PC-3 (cell line): ENCODE measurements at regions of chr1 and their contacts with region 1.

Region 1: DNA sequence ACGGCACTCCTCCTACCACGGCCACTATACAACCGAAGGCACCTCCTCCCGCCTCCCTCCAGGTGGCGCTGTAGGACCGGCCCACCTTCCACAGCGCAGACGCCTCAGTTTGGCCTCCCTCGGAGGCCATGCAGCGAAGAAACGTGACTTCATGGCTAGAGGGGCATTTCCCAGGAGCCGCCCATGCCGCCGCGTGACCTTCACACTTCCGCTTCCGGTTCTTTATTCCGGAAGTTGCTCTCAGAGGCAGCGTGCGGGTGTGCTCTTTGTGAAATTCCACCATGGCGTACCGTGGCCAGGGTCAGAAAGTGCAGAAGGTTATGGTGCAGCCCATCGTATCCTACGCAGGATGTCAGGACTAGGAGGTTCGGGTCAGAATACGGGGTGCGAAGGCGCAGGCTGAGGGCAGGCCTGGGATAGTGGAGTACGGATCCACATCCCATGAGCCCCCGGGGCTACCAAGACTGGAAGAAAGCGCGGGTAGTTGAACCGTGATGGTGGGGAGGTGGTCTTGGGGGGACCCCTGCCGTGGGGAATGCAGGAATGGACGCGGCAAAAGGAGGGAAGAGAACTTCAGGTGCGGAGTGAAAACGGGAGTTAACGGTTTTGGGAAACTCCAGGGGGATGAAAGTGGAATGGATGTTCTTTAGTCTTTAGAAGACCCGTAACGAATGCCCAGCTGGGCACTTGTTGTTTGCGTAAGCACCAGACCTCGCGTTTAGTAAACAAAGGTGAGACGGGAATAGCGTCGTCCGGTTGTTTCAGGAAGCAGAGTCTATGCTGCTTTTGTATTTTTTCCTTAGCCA is at the start of gene SNRPE:
- DNase-seq: peak; percentile 99
- ATAC-seq: peak; percentile 86
- H3K4me3 ChIP-seq: peak within 1 kb of the TSS; percentile 91
- H3K27ac ChIP-seq: peak within 1 kb of the TSS; percentile 82
- H3K4me1 ChIP-seq: peaks cover 36% of the 10 kb centered on the region
- H3K27me3 ChIP-seq: no peaks in the 10 kb centered on the region
- CTCF ChIP-seq: peak; percentile 88
- total RNA-seq, gene SNRPE: 167 and 187 TPM in 2 replicates

Region 2: DNA sequence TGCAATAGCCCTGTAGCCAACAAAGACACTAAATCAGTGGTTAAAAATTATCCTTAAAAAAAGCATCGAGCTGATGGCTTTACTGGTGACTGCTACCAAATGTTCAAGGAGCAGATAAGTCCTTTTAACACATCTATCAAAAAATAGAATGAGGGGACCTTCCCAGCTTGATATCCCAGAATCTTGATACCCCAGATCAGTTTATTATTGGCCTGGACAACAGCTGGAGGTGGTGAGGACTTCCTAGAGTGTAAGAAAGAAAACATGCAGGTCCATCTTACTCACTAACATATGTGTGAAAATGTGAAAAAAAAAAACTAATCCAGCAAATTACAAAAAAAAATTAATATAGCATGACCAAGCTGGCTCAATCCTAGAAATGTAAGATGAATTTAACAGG is 653.4 kb before region 1 on chr1:
- CTCF ChIA-PET with region 1: interaction called, 12 read pairs
- POLR2A ChIA-PET with region 1: no interaction called
- intact Hi-C with region 1: no loop called
- DNase-seq: no peak
- ATAC-seq: no peak
- H3K4me3 ChIP-seq: no peak overlapping the region
- H3K27ac ChIP-seq: no peak overlapping the region
- H3K4me1 ChIP-seq: no peaks in the 10 kb centered on the region
- H3K27me3 ChIP-seq: peaks cover 34% of the 10 kb centered on the region
- CTCF ChIP-seq: no peak

Region 3: GRCh38 chr1:204072931-204073836 is 211.6 kb after region 1 on chr1 and contains the start of gene SOX13:
- CTCF ChIA-PET with region 1: interaction called, 4 read pairs
- POLR2A ChIA-PET with region 1: no interaction called
- intact Hi-C with region 1: loop called (anchors 1 kb)
- DNase-seq: peak; percentile 89
- ATAC-seq: peak; percentile 78
- H3K4me3 ChIP-seq: peak within 1 kb of the TSS; percentile 88
- H3K27ac ChIP-seq: peak within 1 kb of the TSS; percentile 57
- H3K4me1 ChIP-seq: peaks cover 27% of the 10 kb centered on the region
- H3K27me3 ChIP-seq: no peaks in the 10 kb centered on the region
- CTCF ChIP-seq: peak; percentile 32
- total RNA-seq, gene SOX13: 81.9 and 93.1 TPM in 2 replicates

Region 4: GRCh38 chr1:204162231-204163074 is 300.9 kb after region 1 on chr1:
- CTCF ChIA-PET with region 1: interaction called, 12 read pairs
- POLR2A ChIA-PET with region 1: no interaction called
- intact Hi-C with region 1: loop called (anchors 1 kb)
- DNase-seq: peak; percentile 98
- ATAC-seq: peak; percentile 92
- H3K4me3 ChIP-seq: no peak overlapping the region
- H3K27ac ChIP-seq: no peak overlapping the region
- H3K4me1 ChIP-seq: peaks cover 16% of the 10 kb centered on the region
- H3K27me3 ChIP-seq: no peaks in the 10 kb centered on the region
- CTCF ChIP-seq: peak; percentile 100

Region 5: DNA sequence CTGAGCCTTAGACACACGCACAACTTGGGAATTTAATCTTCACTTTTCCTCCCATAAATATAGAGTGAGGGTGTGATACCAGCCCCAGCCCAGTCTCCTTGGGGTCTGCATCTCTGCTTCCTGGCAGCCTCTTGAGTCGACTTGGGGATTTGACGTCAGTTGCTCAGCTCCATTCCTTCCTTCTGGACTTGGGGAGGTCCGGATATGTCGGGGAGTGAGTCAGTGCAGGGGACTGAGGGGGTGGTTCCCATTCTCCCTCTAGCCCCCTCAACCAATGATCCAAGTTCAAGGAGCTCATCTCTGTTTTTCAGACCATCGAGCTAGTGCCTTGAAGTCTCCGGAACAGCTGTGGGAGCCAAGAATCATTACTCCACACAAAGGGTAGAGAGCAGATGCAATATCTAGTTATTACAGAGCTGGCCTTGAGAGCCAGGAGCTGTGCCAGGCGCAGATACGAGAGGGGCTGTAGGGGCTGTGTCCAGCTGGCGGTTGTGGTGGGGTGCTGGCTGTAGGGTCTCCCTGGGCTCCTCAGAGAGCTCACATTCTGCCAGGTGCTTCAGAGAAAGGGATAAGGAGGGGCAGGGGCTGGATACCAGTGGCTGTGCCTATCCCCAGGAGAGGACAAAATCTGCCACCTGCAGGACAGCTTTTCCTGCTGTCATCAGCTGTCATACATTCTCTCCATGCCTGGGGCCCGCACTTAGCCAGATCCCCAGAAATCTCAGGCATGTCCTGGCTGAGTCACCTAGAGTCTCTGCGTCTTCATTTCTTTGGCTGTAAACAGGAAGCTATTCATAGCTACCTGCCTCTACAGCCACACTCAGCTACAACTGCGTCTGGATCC is 336.8 kb after region 1 on chr1:
- CTCF ChIA-PET with region 1: interaction called, 6 read pairs
- POLR2A ChIA-PET with region 1: no interaction called
- intact Hi-C with region 1: loop called (anchors 2 kb)
- DNase-seq: peak; percentile 98
- ATAC-seq: peak; percentile 95
- H3K4me3 ChIP-seq: no peak overlapping the region
- H3K27ac ChIP-seq: peak overlapping the region; percentile 73
- H3K4me1 ChIP-seq: peaks cover 32% of the 10 kb centered on the region
- H3K27me3 ChIP-seq: no peaks in the 10 kb centered on the region
- CTCF ChIP-seq: peak; percentile 74

Region 6: DNA sequence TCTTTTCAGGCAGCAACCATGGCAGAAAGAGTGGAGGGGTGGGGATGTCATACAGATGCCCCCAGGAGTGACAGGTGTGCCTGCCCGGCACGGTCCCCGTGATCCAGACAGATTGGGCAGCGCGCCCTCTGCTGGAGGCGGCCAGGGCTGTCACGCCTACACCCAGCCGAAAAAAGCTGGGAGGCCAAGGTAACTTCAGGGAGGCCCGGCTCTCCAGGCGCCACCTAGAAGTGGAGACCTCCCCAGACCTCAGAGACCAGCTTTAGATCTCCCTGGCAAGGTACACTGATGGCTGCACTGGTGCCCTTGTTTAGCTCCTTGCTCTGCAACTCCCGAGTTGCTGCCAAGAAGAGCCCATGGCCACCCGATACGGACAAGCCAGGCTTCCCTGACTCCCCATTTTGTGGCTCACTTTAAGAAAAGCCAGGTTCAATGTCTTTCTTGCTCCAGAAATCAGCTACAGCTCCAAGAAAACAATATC is 345.6 kb after region 1 on chr1:
- CTCF ChIA-PET with region 1: interaction called, 4 read pairs
- POLR2A ChIA-PET with region 1: no interaction called
- intact Hi-C with region 1: loop called (anchors 2 kb)
- DNase-seq: peak; percentile 81
- ATAC-seq: peak; percentile 96
- H3K4me3 ChIP-seq: no peak overlapping the region
- H3K27ac ChIP-seq: no peak overlapping the region
- H3K4me1 ChIP-seq: peaks cover 22% of the 10 kb centered on the region
- H3K27me3 ChIP-seq: no peaks in the 10 kb centered on the region
- CTCF ChIP-seq: peak; percentile 99